ENCODE measurements at regions of chr20 and their contacts with region 1.

Region 1: GRCh38 chr20:46752728-46753127 is 43.3 kb downstream of the SLC2A10 start:
- DNase-seq: no peak
- ATAC-seq: peak; percentile 55
- H3K4me3 ChIP-seq: no peak overlapping the region
- H3K27ac ChIP-seq: no peak overlapping the region
- H3K4me1 ChIP-seq: no peaks in the 10 kb centered on the region
- H3K27me3 ChIP-seq: no peaks in the 10 kb centered on the region; a peak in 1 of 4 replicates
- CTCF ChIP-seq: peak; percentile 62 to 75 (median 71)
- EP300 ChIP-seq: no peak
- POLR2A ChIP-seq: no peak
- RAD21 ChIP-seq: peak; percentile 68

Region 2: DNA sequence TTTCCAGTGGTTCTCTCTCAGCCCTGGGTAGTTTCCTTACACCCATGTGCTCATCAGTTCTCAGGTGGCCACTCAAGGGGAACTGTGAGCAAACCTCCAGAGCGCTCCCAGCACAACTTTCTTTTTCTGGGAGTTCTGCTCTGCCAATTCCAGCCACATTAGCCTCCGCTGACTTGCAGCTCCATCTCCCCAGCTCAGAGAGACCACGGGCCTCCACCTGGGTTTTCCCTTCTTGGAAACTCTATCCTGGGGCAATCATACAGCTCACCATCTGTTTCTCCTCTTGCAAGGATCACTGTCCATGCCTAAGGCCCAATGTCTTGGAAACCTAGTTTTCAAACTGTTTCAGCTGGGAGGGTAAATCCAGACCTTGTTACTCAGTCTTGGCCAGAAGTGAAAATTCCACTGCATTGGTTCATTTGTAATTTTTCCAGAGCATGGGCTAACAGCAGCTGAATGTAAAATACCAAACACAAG is 271.8 kb after region 1 on chr20:
- CTCF ChIA-PET with region 1: interaction called, 8 read pairs
- POLR2A ChIA-PET with region 1: no interaction called
- RAD21 ChIA-PET with region 1: no interaction called
- SMC1A ChIA-PET with region 1: interaction called, 4 read pairs
- in situ Hi-C with region 1: no loop called
- intact Hi-C with region 1: loop called (anchors 5 kb)
- DNase-seq: no peak
- ATAC-seq: no peak
- H3K4me3 ChIP-seq: no peak overlapping the region
- H3K27ac ChIP-seq: no peak overlapping the region
- H3K4me1 ChIP-seq: no peaks in the 10 kb centered on the region; the same call in 1 of the 2 replicates
- H3K27me3 ChIP-seq: no peaks in the 10 kb centered on the region; a peak in 1 of 4 replicates
- CTCF ChIP-seq: no peak
- EP300 ChIP-seq: no peak
- POLR2A ChIP-seq: no peak
- RAD21 ChIP-seq: no peak